ENCODE measurements at regions of chr7 and their contacts with region 1.

Region 1: GRCh38 chr7:23105644-23106056 is at the start of gene KLHL7:
- DNase-seq: peak; percentile 94

Region 2: DNA sequence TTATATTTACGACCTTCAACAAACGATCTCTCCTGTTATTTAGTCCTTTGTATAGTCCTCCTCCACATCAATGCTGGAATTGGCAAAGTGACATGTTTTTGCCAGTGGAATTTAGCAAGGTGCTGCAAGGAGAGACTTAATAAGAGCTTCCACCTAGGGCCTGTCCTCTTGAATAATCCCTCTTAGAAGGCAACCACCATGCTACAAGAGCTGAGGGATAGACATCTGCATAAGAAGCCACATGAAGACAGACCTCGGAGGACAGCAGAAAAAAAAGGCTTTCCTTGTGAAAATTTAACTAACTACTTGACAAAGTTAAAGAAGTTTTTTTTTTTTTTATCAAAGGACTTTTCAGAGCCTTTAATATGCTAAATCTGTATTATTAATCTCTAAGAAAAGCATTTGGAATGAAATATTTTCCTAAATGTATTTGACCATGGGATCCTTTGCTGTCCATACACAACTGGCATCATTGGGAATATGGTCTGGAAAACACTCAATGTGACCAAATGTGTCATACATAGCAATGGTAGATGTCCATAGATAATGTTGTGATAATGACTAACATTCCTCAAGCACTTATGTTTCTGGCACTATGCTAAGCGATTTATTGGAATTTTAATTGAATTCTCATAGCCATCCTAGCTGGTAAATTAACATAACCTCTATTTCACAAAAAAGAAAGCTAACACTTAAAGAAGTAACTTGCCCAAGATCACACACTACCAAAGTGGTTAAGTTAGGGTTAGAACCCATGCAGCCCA is 104.9 kb before region 1 on chr7:
- CTCF ChIA-PET with region 1: no interaction called
- POLR2A ChIA-PET with region 1: no interaction called
- DNase-seq: no peak

Region 3: GRCh38 chr7:23181684-23182553 is 76.3 kb after region 1 on chr7 and contains the start of gene NUP42:
- CTCF ChIA-PET with region 1: no interaction called
- POLR2A ChIA-PET with region 1: interaction called, 28 read pairs
- DNase-seq: peak; percentile 95

Measured in HEK293T (cell line).